GM10248 (cell line): ENCODE measurements at regions of chr14 and their contacts with region 1.

Region 1: GRCh38 chr14:106436310-106436905 is 910.0 kb downstream of the TMEM121 start:
- DNase-seq: peak; percentile 6
- CTCF ChIP-seq: peak; percentile 65

Region 2: DNA sequence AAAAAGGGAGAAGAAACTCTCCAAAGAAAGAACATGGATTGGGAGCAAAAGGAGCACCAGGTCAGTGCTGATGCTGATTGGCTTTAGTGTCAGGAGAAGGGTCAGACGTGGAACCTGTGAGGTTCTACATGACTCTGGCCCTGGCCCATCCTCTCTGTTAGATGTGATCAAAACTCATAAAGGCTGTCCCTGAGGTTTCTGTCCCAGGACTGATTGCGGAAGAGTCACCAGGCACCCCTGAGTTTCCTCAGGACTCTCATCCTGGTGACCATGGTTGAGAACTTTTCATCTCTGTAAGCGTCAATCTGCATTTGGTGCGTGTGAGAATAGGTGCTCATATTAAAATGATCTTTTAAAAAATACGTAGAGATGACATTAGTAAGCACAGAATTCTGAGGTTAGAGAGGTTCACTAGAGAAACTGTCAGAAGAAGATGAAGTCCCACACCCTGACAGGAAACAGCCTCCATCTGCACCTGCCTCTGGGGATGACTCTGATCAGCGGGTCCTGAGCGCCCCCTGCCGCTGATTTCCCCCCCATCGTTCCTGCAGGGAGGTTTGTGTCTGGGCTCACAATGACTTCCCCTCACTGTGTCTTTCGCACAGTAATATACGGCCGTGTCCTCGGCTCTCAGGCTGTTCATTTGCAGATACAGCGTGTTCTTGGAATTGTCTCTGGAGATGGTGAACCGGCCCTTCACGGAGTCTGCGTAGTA is 168.2 kb before region 1 on chr14:
- CTCF ChIA-PET with region 1: no interaction called
- POLR2A ChIA-PET with region 1: no interaction called
- DNase-seq: peak; percentile 20
- CTCF ChIP-seq: no peak

Region 3: DNA sequence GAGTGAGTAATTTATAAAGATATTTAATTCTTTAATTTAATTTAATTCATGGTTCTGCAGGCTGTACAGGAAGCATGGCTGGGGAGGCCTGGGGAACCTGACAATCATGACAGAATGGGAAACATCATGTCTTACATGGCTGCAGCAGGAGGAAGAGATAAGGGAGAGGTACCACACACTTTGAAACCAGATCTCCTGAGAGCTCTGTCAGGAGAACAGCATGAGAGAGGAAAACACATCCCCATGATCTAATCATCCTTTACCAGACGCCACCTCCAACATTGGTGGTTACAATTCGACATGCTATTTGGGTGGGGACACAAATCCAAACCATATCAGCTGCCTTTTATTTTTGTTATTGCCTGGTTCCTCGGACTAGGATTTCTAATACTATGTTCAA is 18.6 kb after region 1 on chr14:
- CTCF ChIA-PET with region 1: interaction called, 12 read pairs
- POLR2A ChIA-PET with region 1: no interaction called
- DNase-seq: no peak
- CTCF ChIP-seq: no peak

Region 4: GRCh38 chr14:106511006-106511799 is 74.8 kb after region 1 on chr14:
- CTCF ChIA-PET with region 1: interaction called, 15 read pairs
- POLR2A ChIA-PET with region 1: no interaction called
- DNase-seq: no peak
- CTCF ChIP-seq: no peak

Region 5: GRCh38 chr14:106518054-106518943 is 81.9 kb after region 1 on chr14:
- CTCF ChIA-PET with region 1: interaction called, 18 read pairs
- POLR2A ChIA-PET with region 1: no interaction called
- DNase-seq: peak; percentile 29
- CTCF ChIP-seq: peak; percentile 80